ENCODE measurements at regions of chr11 and their contacts with region 1.

Region 1: DNA sequence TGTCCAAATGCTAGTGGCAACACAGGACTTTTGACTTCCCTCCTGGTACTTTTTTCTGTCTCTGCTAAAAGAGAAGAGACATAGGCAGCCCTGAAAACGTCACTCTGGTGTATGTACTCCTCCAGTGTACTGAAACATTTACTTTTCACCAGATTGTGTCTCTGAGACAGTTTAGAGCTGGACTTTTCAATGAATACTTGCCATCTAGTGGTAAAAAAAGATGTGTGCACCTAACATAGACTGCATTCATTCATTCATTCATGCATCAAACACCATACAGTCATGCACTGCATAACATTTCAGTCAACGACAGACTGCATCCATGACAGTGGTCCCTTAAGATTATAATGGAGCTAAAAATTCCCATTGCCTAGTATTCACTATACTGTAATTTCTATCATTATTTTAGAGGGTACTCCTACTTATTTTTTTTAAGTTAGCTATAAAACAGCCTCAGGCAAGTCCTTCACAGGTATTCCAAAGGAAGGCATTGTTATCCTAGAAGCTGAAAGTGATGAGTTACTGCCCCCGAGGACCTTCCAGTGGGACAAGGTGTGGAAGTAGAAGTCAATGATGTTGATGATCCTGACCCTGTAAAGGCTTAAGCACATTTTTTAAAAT is 186.2 kb downstream of the SPON1 start:
- DNase-seq: peak; percentile 23
- H3K27ac ChIP-seq: no peak overlapping the region
- CTCF ChIP-seq: peak; percentile 49

Region 2: GRCh38 chr11:13776134-13776815 is 372.5 kb before region 1 on chr11:
- CTCF ChIA-PET with region 1: interaction called, 10 read pairs
- POLR2A ChIA-PET with region 1: no interaction called
- DNase-seq: no peak
- H3K27ac ChIP-seq: no peak overlapping the region
- CTCF ChIP-seq: no peak

Region 3: GRCh38 chr11:13970986-13971385 is 177.8 kb before region 1 on chr11:
- CTCF ChIA-PET with region 1: interaction called, 12 read pairs
- POLR2A ChIA-PET with region 1: no interaction called
- DNase-seq: peak; percentile 23
- H3K27ac ChIP-seq: no peak overlapping the region
- CTCF ChIP-seq: no peak; the same call in 1 of the 2 replicates

Region 4: DNA sequence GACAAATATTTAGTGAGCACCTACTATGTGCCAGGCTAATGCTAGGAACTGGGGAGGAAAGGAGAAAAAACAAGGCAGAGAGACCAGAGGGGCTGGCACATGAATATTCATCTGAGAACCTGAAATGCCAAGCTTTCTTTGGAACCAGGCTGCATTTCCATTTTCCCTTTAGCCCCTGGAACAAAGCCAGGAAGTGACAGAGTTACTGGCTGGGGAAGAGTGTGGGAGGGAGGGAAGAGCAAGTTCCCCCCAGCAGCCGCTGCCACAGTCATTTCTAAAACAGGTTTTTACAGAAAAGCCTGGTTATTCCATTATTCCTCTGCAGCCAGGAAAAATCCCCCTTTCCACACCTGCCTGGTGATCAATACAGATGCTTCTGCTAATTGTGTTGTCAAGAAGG is 89.3 kb before region 1 on chr11:
- CTCF ChIA-PET with region 1: no interaction called
- POLR2A ChIA-PET with region 1: no interaction called
- DNase-seq: no peak
- H3K27ac ChIP-seq: no peak overlapping the region
- CTCF ChIP-seq: no peak

Region 5: GRCh38 chr11:14163576-14163975 is 14.8 kb after region 1 on chr11:
- CTCF ChIA-PET with region 1: no interaction called
- POLR2A ChIA-PET with region 1: no interaction called
- DNase-seq: no peak
- H3K27ac ChIP-seq: no peak overlapping the region
- CTCF ChIP-seq: no peak

Measured in RWPE1 (cell line).